Activated T-helper 2 cell treated with anti-CD3 and anti-CD28 coated beads, Interferon-gamma antibody, Interleukin-2, Interleukin-4, amounts not matched to agents 10 μg/mL and 5 μg/mL and 100 μg/mL, durations not matched to agents 14 hours and 24 hours and 36 hours (primary cell): ENCODE measurements at regions of chr1 and their contacts with region 1.

Region 1: GRCh38 chr1:86704458-86704971 is at the start of gene SH3GLB1:
- DNase-seq: peak; percentile 89
- H3K4me3 Mint-ChIP-seq: peak within 1 kb of the TSS; percentile 98
- H3K27ac Mint-ChIP-seq: peak within 1 kb of the TSS; percentile 97
- H3K4me1 Mint-ChIP-seq: peaks cover 38% of the 10 kb centered on the region
- H3K27me3 Mint-ChIP-seq: peaks cover 8% of the 10 kb centered on the region
- total RNA-seq, gene SH3GLB1: 60.5 and 65.7 TPM in 2 replicates

Region 2: GRCh38 chr1:86380257-86380861 is 324.2 kb before region 1 on chr1:
- intact Hi-C with region 1: loop called (anchors 10 kb)
- DNase-seq: no peak
- H3K4me3 Mint-ChIP-seq: no peak overlapping the region
- H3K27ac Mint-ChIP-seq: no peak overlapping the region
- H3K4me1 Mint-ChIP-seq: peaks cover 11% of the 10 kb centered on the region
- H3K27me3 Mint-ChIP-seq: no peaks in the 10 kb centered on the region

Region 3: GRCh38 chr1:86499987-86500593 is 204.4 kb before region 1 on chr1:
- intact Hi-C with region 1: loop called (anchors 10 kb)
- DNase-seq: no peak
- H3K4me3 Mint-ChIP-seq: no peak overlapping the region
- H3K27ac Mint-ChIP-seq: no peak overlapping the region
- H3K4me1 Mint-ChIP-seq: peaks cover 14% of the 10 kb centered on the region
- H3K27me3 Mint-ChIP-seq: peaks cover 37% of the 10 kb centered on the region

Region 4: GRCh38 chr1:86636898-86637297 is 67.6 kb before region 1 on chr1:
- intact Hi-C with region 1: no loop called
- DNase-seq: no peak
- H3K4me3 Mint-ChIP-seq: no peak overlapping the region
- H3K27ac Mint-ChIP-seq: no peak overlapping the region
- H3K4me1 Mint-ChIP-seq: no peaks in the 10 kb centered on the region
- H3K27me3 Mint-ChIP-seq: no peaks in the 10 kb centered on the region

Region 5: GRCh38 chr1:86714561-86715244 is 10.2 kb after region 1 on chr1:
- intact Hi-C with region 1: no loop called
- DNase-seq: no peak
- H3K4me3 Mint-ChIP-seq: no peak overlapping the region
- H3K27ac Mint-ChIP-seq: peak overlapping the region; percentile 3
- H3K4me1 Mint-ChIP-seq: peaks cover 22% of the 10 kb centered on the region
- H3K27me3 Mint-ChIP-seq: no peaks in the 10 kb centered on the region

Region 6: GRCh38 chr1:86741947-86742572 is 37.5 kb after region 1 on chr1:
- intact Hi-C with region 1: loop called (anchors 2 kb)
- DNase-seq: no peak
- H3K4me3 Mint-ChIP-seq: no peak overlapping the region
- H3K27ac Mint-ChIP-seq: no peak overlapping the region
- H3K4me1 Mint-ChIP-seq: no peaks in the 10 kb centered on the region
- H3K27me3 Mint-ChIP-seq: no peaks in the 10 kb centered on the region

Region 7: GRCh38 chr1:87045761-87046304 is 341.3 kb after region 1 on chr1:
- intact Hi-C with region 1: loop called (anchors 10 kb)
- DNase-seq: peak; percentile 52
- H3K4me3 Mint-ChIP-seq: peak overlapping the region; percentile 45
- H3K27ac Mint-ChIP-seq: peak overlapping the region; percentile 90
- H3K4me1 Mint-ChIP-seq: peaks cover 48% of the 10 kb centered on the region
- H3K27me3 Mint-ChIP-seq: no peaks in the 10 kb centered on the region

Region 8: DNA sequence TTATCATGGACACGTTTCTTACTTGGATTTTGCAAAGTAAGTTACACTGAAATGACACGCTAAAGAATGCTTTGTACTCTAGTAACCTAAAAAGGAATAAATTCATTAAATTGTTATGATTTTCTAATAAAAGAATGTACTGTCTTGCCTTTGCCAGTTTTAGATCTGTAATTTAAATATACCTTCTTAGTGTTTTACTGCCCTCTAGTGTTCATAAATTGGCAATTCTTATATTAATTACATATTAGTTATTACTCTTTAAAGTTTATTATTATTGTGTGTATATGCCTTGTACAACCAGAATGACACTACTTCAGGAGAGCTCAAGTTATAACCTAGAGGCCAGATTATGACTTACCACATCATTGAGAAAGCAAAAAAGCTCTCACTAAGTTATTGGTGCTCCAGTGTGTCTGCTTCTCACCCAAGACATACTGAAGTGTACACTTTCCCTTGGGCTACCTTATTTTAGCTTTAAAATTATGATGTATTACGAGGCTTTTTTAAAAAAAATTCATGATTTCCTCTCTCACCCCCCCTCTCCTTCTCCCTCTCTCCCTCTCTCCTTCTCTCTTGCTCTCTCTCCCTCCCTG is 379.8 kb after region 1 on chr1:
- intact Hi-C with region 1: loop called (anchors 10 kb)
- DNase-seq: no peak
- H3K4me3 Mint-ChIP-seq: no peak overlapping the region
- H3K27ac Mint-ChIP-seq: no peak overlapping the region
- H3K4me1 Mint-ChIP-seq: peaks cover 22% of the 10 kb centered on the region
- H3K27me3 Mint-ChIP-seq: no peaks in the 10 kb centered on the region

Region 9: GRCh38 chr1:87328272-87329050 is 623.9 kb after region 1 on chr1 and contains the start of gene LMO4:
- intact Hi-C with region 1: loop called (anchors 10 kb)
- DNase-seq: peak; percentile 76
- H3K4me3 Mint-ChIP-seq: peak within 1 kb of the TSS; percentile 92
- H3K27ac Mint-ChIP-seq: peak within 1 kb of the TSS; percentile 89
- H3K4me1 Mint-ChIP-seq: peaks cover 32% of the 10 kb centered on the region
- H3K27me3 Mint-ChIP-seq: peaks cover 26% of the 10 kb centered on the region
- total RNA-seq, gene LMO4: 20.9 and 21.7 TPM in 2 replicates